ENCODE measurements at regions of chr17 and their contacts with region 1.

Region 1: GRCh38 chr17:58006924-58007780 is at the start of gene SRSF1:
- DNase-seq: peak; percentile 97
- ATAC-seq: peak; percentile 92
- H3K4me3 ChIP-seq: peak within 1 kb of the TSS; percentile 79 to 99 (median 92)
- H3K27ac ChIP-seq: peak within 1 kb of the TSS; percentile 99
- H3K4me1 ChIP-seq: peaks cover 55% of the 10 kb centered on the region
- H3K27me3 ChIP-seq: no peaks in the 10 kb centered on the region; a peak in 1 of 5 replicates
- CTCF ChIP-seq: no peak
- EP300 ChIP-seq: peak; percentile 16 to 62; a peak in 1 of 4 replicates
- POLR2A ChIP-seq: peak; percentile 97 to 98
- RAD21 ChIP-seq: peak; percentile 44
- total RNA-seq, gene SRSF1: 445 and 520 TPM in 2 replicates

Region 2: DNA sequence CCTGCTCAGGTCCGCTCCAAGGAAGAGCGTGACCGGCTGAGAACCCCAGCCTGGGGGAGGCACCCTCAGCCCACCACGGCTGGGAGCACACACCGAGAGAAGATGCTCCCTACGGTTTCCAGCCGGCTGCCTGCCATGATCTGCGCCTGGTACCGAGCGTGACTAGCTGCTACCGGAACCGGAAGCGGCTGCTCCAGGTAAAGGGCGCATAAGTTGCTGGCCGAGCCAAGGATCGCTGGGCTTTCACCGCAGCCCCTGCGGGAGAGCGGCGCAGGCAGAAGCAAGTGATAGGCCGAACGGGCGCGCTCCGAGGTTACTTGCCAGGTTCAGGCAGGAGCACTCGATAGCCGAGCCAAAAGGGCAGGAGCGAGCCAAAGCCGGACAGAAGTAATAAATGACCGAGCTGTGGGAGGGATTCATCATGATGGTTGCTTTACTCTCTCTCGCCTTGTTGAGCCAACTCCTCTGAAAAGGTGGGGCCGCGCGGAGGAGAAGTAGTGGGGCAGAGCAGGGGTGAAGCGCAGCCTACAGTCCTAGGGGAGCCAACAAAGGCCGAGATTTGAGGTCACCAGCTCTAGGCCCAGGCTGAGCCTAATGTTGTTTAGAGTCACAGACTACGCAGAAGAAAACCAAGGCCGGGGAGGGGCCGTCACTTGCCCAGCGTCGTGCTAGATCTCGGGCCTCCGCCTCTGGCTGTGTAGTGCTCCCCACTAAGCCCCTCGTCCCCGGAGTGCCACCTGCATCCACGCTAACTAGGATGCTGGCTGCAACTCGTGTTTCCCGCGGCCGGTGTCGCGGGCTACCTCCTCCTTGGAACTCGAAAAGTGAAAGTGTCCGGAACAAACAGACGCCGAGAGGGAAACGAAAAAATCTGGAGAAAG is 157.0 kb before region 1 on chr17 and contains the start of gene MRPS23:
- CTCF ChIA-PET with region 1: no interaction called
- POLR2A ChIA-PET with region 1: interaction called, 173 read pairs
- in situ Hi-C with region 1: no loop called
- intact Hi-C with region 1: no loop called
- DNase-seq: peak; percentile 99
- ATAC-seq: peak; percentile 82
- H3K4me3 ChIP-seq: peak within 1 kb of the TSS; percentile 88 to 93 (median 90)
- H3K27ac ChIP-seq: peak within 1 kb of the TSS; percentile 86
- H3K4me1 ChIP-seq: peaks cover 62% of the 10 kb centered on the region
- H3K27me3 ChIP-seq: no peaks in the 10 kb centered on the region; a peak in 1 of 5 replicates
- CTCF ChIP-seq: peak; percentile 34; the same call in 1 of the 2 replicates
- EP300 ChIP-seq: peak; percentile 55 to 76; a peak in 3 of 4 replicates
- POLR2A ChIP-seq: peak; percentile 80 to 86
- RAD21 ChIP-seq: peak; percentile 37; the same call in 1 of the 2 replicates
- total RNA-seq, gene MRPS23: 181 and 283 TPM in 2 replicates

Region 3: GRCh38 chr17:57861000-57861789 is 146.0 kb before region 1 on chr17:
- CTCF ChIA-PET with region 1: no interaction called
- POLR2A ChIA-PET with region 1: interaction called, 173 read pairs
- in situ Hi-C with region 1: no loop called
- intact Hi-C with region 1: no loop called
- DNase-seq: peak; percentile 94
- ATAC-seq: peak; percentile 56
- H3K4me3 ChIP-seq: peak overlapping the region; percentile 71 to 90 (median 81)
- H3K27ac ChIP-seq: peak overlapping the region; percentile 77
- H3K4me1 ChIP-seq: peaks cover 68% of the 10 kb centered on the region
- H3K27me3 ChIP-seq: no peaks in the 10 kb centered on the region; a peak in 1 of 5 replicates
- CTCF ChIP-seq: peak; percentile 26; the same call in 1 of the 2 replicates
- EP300 ChIP-seq: peak in 1 of 2 experiments; percentile 90; a peak in 2 of 4 replicates
- POLR2A ChIP-seq: peak; percentile 46 to 72; a peak in 2 of 4 replicates
- RAD21 ChIP-seq: no peak

Region 4: GRCh38 chr17:57902800-57903759 is 104.1 kb before region 1 on chr17:
- CTCF ChIA-PET with region 1: no interaction called
- POLR2A ChIA-PET with region 1: interaction called, 13 read pairs
- in situ Hi-C with region 1: no loop called
- intact Hi-C with region 1: no loop called
- DNase-seq: peak; percentile 97
- ATAC-seq: peak; percentile 89
- H3K4me3 ChIP-seq: peak overlapping the region in 1 of 3 experiments; percentile 39; a peak in 1 of 6 replicates
- H3K27ac ChIP-seq: peak overlapping the region; percentile 87
- H3K4me1 ChIP-seq: peaks cover 91% of the 10 kb centered on the region
- H3K27me3 ChIP-seq: no peaks in the 10 kb centered on the region
- CTCF ChIP-seq: peak; percentile 27; the same call in 1 of the 2 replicates
- EP300 ChIP-seq: peak; percentile 57 to 85; a peak in 3 of 4 replicates
- POLR2A ChIP-seq: peak; percentile 42 to 45; a peak in 1 of 4 replicates
- RAD21 ChIP-seq: no peak; the same call in 1 of the 2 replicates

Region 5: GRCh38 chr17:57987580-57988421 is 19.4 kb before region 1 on chr17 and contains the start of gene VEZF1:
- CTCF ChIA-PET with region 1: no interaction called
- POLR2A ChIA-PET with region 1: interaction called, 64 read pairs
- in situ Hi-C with region 1: no loop called
- intact Hi-C with region 1: no loop called
- DNase-seq: peak; percentile 68
- ATAC-seq: peak; percentile 61
- H3K4me3 ChIP-seq: peak within 1 kb of the TSS; percentile 71 to 95 (median 83)
- H3K27ac ChIP-seq: peak within 1 kb of the TSS; percentile 80
- H3K4me1 ChIP-seq: peaks cover 82% of the 10 kb centered on the region
- H3K27me3 ChIP-seq: no peaks in the 10 kb centered on the region; a peak in 1 of 5 replicates
- CTCF ChIP-seq: peak; percentile 12; the same call in 1 of the 2 replicates
- EP300 ChIP-seq: no peak; a peak in 1 of 4 replicates
- POLR2A ChIP-seq: peak in 1 of 2 experiments; percentile 27; a peak in 3 of 4 replicates
- RAD21 ChIP-seq: peak; percentile 35
- total RNA-seq, gene VEZF1: 45.9 and 48.0 TPM in 2 replicates

Region 6: GRCh38 chr17:58024945-58025344 is 17.8 kb after region 1 on chr17:
- CTCF ChIA-PET with region 1: no interaction called
- POLR2A ChIA-PET with region 1: interaction called, 10 read pairs
- in situ Hi-C with region 1: no loop called
- intact Hi-C with region 1: no loop called
- DNase-seq: no peak
- ATAC-seq: no peak
- H3K4me3 ChIP-seq: no peak overlapping the region
- H3K27ac ChIP-seq: no peak overlapping the region
- H3K4me1 ChIP-seq: no peaks in the 10 kb centered on the region
- H3K27me3 ChIP-seq: no peaks in the 10 kb centered on the region
- CTCF ChIP-seq: no peak
- EP300 ChIP-seq: no peak
- POLR2A ChIP-seq: no peak
- RAD21 ChIP-seq: no peak